Endothelial cell of umbilical vein (primary cell): ENCODE measurements at regions of chr20 and their contacts with region 1.

Region 1: DNA sequence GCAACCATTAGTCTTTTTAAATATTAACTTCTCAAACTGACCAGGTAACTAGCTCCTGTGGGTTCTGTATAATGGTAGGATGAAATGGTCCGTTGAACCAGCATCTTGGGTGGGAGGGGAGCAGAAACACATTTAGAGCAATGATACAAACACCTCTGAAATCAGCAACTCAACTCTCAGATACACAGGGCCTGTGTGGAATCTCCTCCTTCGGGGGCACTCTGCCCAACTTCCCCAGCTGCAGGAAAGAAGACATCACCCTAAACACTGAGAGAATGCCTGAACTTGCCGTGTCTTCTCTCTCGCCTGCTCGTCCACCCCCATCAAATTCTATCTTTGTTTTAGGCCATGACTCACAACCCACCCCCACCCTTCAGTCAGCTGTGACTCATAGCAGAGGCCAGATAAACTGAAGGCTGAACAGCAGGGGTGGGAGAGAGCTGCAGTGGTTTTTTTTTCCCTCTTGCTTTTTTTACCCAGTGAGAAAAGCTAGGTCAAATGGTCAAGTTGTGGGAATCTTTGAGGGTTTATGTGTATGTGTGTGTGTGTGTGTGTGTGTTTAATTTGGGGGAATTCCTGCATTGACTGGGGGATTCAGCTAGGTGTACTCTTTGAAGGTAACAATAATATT is 593.4 kb upstream of the JAG1 start:
- DNase-seq: peak; percentile 94
- H3K4me3 ChIP-seq: no peak overlapping the region
- H3K27ac ChIP-seq: peak overlapping the region; percentile 56
- H3K4me1 ChIP-seq: peaks cover 23% of the 10 kb centered on the region
- H3K27me3 ChIP-seq: no peaks in the 10 kb centered on the region
- CTCF ChIP-seq: peak in 1 of 2 donors; percentile 13
- POLR2A ChIP-seq: no peak

Region 2: GRCh38 chr20:10761232-10761631 is 506.0 kb before region 1 on chr20:
- CTCF ChIA-PET with region 1: interaction called, 4 read pairs
- POLR2A ChIA-PET with region 1: no interaction called
- dilution Hi-C with region 1: no loop called
- intact Hi-C with region 1: loop called (anchors 2 kb)
- DNase-seq: peak; percentile 93
- H3K4me3 ChIP-seq: no peak overlapping the region
- H3K27ac ChIP-seq: peak overlapping the region; percentile 78
- H3K4me1 ChIP-seq: peaks cover 41% of the 10 kb centered on the region
- H3K27me3 ChIP-seq: no peaks in the 10 kb centered on the region
- CTCF ChIP-seq: no peak
- POLR2A ChIP-seq: peak; percentile 36

Region 3: DNA sequence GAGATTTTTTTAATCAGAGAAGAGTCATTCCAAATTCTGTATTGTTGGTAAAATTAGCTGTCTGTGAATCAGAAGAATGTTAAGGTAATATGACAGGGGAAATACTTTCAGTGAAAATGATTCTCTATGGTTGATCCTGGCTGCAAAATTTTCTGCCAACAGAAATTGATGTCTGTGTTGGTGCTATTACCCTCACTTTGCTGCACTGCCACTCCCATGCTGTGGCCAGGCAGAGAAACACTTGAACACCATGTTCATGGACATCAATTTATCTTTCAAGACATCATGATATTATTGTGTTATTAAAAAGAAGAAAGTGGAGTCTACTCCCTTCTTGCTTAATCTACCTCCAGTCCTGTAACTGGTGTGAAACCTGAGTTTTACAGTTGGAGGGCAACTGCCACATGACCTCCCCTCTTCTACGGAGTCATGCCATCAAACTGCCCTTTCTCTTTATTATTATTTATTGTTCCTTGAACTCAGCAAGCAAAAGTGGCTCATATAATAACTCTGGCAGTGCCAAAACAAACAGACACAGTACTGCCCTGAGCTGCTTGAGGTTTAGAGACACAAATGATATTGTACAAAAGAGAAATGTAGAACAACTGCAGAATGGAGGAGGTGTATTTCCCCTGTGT is 305.5 kb before region 1 on chr20:
- CTCF ChIA-PET with region 1: no interaction called
- POLR2A ChIA-PET with region 1: no interaction called
- dilution Hi-C with region 1: no loop called
- intact Hi-C with region 1: loop called (anchors 2 kb)
- DNase-seq: peak; percentile 75
- H3K4me3 ChIP-seq: no peak overlapping the region
- H3K27ac ChIP-seq: no peak overlapping the region
- H3K4me1 ChIP-seq: peaks cover 36% of the 10 kb centered on the region
- H3K27me3 ChIP-seq: no peaks in the 10 kb centered on the region
- CTCF ChIP-seq: no peak
- POLR2A ChIP-seq: no peak

Region 4: GRCh38 chr20:11216451-11217314 is 50.6 kb before region 1 on chr20:
- CTCF ChIA-PET with region 1: interaction called, 8 read pairs
- POLR2A ChIA-PET with region 1: interaction called, 3 read pairs
- dilution Hi-C with region 1: no loop called
- intact Hi-C with region 1: loop called (anchors 1 kb)
- DNase-seq: peak; percentile 88
- H3K4me3 ChIP-seq: no peak overlapping the region
- H3K27ac ChIP-seq: peak overlapping the region; percentile 74
- H3K4me1 ChIP-seq: peaks cover 33% of the 10 kb centered on the region
- H3K27me3 ChIP-seq: no peaks in the 10 kb centered on the region
- CTCF ChIP-seq: no peak
- POLR2A ChIP-seq: no peak

Region 5: DNA sequence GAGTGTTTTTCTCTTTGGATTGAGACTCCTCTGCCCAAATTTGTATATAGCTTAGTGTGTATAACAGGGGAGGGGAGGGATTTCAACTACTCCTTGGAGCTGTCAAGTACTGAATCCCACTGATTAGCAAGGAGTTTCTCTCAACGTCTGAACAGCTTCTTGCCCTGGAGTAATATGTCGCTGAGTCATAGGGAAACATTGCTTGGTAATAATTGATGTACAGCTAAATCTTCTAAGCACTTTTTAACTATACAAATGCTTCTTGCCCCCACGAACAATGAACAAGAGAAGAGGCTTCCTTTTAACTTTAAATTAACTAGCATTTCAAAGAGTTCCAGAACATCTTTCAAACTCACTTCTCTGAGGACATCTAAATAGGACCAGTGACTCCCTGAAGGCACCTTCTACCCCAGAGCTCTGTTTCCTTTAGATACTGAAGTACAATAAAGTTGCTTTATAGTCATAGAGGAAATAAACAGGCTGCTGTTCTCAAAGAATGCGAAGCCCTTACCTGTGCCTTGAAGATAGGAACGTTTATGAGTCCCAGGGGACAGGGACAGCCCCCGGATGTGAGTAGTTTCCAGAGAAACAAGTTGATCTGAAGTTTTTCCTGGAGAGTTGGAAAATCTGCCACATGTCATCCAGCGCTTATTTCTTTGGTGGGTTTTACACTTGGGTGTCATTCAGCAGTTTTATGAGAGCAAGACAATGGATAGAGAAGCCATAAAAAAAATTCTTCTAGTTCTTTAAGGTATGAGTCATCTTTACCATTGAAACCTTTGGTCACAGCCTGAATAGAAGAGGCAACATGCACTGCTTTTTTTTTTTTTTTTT is 187.9 kb after region 1 on chr20:
- CTCF ChIA-PET with region 1: interaction called, 3 read pairs
- POLR2A ChIA-PET with region 1: no interaction called
- dilution Hi-C with region 1: no loop called
- intact Hi-C with region 1: loop called (anchors 1 kb)
- DNase-seq: peak; percentile 93
- H3K4me3 ChIP-seq: peak overlapping the region in 1 of 3 experiments; percentile 27
- H3K27ac ChIP-seq: peak overlapping the region; percentile 93
- H3K4me1 ChIP-seq: peaks cover 38% of the 10 kb centered on the region
- H3K27me3 ChIP-seq: no peaks in the 10 kb centered on the region
- CTCF ChIP-seq: no peak
- POLR2A ChIP-seq: peak; percentile 10